Colonic mucosa (tissue), 4 donors: ENCODE measurements at regions of chr6 and their contacts with region 1.

Region 1: GRCh38 chr6:31079656-31080261 is 32.6 kb downstream of the C6orf15 start:
- DNase-seq: peak; percentile 80
- H3K4me3 ChIP-seq: peak overlapping the region; percentile 1
- H3K27ac ChIP-seq: no peak overlapping the region
- H3K4me1 ChIP-seq: no peaks in the 10 kb centered on the region
- H3K27me3 ChIP-seq: no peaks in the 10 kb centered on the region
- CTCF ChIP-seq: peak; percentile 73

Region 2: DNA sequence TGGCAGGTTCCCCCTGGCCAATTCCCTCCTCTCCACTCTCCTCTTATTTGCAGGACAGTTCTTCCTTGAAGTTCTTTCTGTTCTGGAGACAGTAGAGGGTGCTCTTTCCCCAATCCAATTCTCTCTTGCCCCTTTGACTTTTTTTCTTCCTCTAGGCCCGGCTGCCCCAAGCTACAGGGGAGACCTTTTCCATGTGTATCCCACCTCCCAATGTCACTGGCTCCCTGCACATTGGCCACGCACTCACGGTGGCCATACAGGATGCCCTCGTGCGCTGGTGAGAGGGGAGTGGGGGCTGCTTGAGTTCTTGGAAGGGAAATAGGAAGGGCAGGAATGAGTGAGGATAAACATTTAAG is 164.2 kb before region 1 on chr6:
- intact Hi-C with region 1: loop called (anchors 5 kb)
- DNase-seq: peak; percentile 48
- H3K4me3 ChIP-seq: no peak overlapping the region
- H3K27ac ChIP-seq: peak overlapping the region; percentile 80
- H3K4me1 ChIP-seq: peaks cover 3% of the 10 kb centered on the region
- H3K27me3 ChIP-seq: no peaks in the 10 kb centered on the region
- CTCF ChIP-seq: peak; percentile 37